ENCODE measurements at regions of chr17 and their contacts with region 1.

Region 1: GRCh38 chr17:34420254-34420766 is 57.3 kb upstream of the CCL1 start:
- DNase-seq: peak; percentile 52 to 94 (median 76)

Region 2: DNA sequence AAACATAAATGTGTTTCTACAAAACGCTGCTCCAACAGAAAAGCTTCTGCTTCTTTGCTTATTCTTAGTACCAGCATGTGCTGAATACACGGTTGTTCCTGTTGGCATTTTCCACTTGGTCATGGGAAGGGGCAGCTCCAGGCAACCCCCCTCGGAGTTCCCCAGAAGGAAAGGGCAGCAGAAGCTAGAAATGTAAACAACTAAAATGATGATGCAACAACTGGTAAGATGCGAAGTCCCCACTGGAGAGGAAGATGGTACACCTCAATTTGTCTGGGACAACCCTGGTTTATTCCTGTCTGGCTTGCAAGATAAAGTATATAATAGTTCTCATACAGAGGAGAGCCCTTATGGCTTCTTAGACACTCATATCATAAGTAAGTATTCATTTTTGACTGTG is 73.2 kb before region 1 on chr17:
- intact Hi-C with region 1: no loop called
- DNase-seq: no peak

Region 3: DNA sequence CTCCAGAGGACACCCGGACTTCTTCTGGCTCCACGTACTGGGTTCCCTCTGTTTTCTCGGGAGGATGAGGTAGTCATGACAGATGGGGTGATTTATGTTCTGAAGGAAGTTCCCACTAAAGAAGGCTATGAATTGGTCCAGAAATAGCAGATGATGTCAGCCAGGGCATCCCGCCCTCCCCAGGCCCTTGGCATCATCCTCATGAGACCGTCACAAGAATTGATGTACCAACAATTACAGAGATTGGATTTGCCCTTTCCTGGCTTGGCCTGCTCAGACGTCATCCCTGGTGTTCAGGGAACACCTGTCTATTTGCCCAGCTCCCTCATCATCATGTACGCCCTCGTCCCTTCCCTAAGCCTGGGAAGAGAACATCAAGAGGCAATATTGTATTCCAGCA is 45.5 kb after region 1 on chr17:
- intact Hi-C with region 1: no loop called
- DNase-seq: no peak

Region 4: DNA sequence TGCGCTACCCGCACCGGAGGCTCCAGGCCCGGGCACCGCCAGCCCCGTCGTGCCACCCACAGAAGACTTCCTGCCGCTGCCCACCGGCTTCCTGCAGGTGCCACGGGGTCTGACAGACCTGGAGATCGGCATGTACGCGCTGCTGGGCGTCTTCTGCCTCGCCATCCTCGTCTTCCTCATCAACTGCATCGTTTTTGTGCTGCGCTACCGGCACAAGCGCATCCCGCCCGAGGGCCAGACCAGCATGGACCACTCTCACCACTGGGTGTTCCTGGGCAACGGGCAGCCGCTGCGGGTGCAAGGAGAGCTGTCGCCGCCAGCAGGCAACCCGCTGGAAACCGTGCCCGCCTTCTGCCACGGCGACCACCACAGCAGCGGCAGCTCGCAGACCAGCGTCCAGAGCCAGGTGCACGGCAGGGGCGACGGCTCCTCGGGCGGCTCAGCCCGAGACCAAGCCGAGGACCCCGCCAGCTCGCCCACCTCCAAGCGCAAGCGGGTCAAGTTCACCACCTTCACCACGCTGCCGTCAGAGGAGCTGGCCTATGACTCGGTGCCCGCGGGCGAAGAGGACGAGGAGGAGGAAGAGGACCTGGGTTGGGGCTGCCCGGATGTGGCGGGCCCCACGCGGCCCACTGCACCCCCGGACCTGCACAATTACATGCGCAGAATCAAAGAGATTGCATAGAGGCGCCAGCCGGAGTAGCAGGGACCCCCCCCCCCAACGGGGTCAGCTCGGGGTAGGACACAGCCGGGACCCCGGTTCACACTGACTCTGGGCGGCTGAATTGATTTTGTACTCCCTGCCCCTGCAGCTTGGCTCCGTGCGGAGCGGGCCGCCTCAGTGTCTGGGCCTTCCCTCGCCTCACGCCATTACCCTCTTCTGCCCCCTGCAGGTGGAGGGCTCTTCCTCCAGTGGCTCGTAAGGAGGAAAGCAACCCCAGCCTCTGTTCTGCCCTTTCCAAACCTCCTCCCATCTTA is 217.5 kb after region 1 on chr17:
- intact Hi-C with region 1: loop called (anchors 2 kb)
- DNase-seq: peak; percentile 36 to 96 (median 74)

Region 5: DNA sequence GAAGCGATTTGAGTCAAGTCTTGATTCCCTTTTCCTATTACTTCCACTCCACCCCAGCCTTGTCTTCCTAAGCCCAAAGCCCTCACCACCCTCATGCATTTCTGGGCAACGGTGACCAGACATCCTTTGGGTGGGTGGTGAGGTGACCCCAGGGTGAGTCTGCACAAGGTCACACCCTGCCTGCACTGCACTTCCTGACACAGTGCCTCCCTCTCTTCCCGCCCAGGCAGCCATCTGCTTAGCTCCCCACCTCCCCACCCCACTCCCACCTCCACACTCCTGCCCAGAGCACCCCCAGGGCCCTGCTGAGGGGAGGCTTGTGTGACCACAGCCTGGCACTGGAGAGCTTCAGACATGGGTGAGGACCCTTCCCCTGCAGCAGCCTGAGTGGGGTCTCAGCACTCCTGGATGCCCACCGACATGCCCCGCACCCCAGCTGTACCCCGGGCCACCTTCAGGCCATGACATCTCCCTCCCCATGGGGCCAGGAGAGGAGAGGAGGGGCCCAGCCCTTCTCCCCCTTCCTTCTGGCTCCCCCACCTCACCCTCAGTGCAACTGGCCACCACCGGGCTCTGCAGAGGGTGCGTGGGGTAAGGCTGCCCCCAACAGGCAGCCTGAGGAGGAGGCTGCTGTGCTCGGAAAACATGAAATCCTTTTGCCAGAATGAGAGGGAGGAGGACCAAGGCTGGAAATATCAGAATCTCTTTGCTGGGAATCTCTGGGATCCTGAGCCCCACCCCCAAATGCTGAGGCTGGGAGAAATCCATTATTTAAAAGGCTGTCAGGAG is 472.3 kb after region 1 on chr17:
- intact Hi-C with region 1: loop called (anchors 10 kb)
- DNase-seq: peak in 7 of 10 donors; percentile 30 to 89 (median 53)

Region 6: DNA sequence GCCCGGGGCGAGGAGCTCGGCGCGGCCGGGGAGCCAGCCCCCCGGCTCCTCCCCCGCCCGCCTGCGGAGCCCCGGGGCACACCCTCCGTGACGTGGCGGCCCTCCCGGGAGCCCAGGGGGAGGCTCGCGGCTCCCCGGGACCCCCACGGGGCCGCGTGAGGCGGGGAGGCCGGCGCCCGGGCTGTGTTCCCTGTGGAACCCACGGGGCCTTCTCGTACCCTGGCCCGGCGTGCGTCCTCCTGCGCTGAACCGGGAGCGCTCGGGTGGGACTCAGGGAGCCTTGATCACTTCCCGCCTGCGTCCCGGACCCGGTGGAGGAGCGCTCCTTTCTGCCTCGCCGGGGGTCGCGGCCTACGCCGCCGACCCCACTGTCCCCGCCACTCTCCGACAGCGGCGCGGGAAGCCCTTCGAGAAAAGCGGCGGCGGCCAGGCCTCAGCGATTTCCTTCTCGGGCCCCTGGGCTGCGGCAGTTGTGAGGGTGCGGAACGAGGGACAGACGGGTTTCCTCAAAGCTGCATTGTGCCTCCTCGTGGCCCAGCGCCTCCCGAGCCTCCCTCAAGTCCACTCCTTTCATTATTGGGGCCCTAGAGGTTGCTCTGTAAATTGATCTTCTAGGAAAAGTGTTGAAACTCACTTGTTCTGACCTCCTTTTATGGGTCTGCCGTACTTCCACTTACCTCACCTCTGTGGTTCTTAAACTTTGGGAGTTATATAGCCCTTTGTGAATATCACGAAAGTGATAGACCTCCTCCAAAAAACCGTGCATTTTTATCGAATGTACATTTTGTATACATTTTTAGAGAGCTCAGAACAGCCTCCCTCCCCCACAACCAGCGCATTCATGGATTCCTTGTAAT is 560.6 kb after region 1 on chr17:
- intact Hi-C with region 1: loop called (anchors 10 kb)
- DNase-seq: peak; percentile 41 to 96 (median 65)

Region 7: GRCh38 chr17:35119368-35120165 is 699.3 kb after region 1 on chr17 and contains the start of gene RAD51D:
- intact Hi-C with region 1: loop called (anchors 1 kb)
- DNase-seq: peak; percentile 42 to 96 (median 68)